ENCODE measurements at regions of chr15 and their contacts with region 1.

Region 1: GRCh38 chr15:44426975-44427755 is at the start of gene CTDSPL2:
- DNase-seq: peak; percentile 98 to 99 (median 99)
- H3K4me3 ChIP-seq: peak within 1 kb of the TSS; percentile 34 to 95 (median 65)
- H3K27ac ChIP-seq: peak within 1 kb of the TSS; percentile 88 to 99 (median 94)
- H3K4me1 ChIP-seq: peaks cover 13 to 24% of the 10 kb centered on the region in 2 donors
- H3K27me3 ChIP-seq: no peaks in the 10 kb centered on the region
- CTCF ChIP-seq: peak in 2 of 6 experiments; percentile 22 to 47
- POLR2A ChIP-seq: peak in 1 of 2 donors; percentile 86
- total RNA-seq, gene CTDSPL2: 12.1 to 70.9 (median 32.3) TPM

Region 2: DNA sequence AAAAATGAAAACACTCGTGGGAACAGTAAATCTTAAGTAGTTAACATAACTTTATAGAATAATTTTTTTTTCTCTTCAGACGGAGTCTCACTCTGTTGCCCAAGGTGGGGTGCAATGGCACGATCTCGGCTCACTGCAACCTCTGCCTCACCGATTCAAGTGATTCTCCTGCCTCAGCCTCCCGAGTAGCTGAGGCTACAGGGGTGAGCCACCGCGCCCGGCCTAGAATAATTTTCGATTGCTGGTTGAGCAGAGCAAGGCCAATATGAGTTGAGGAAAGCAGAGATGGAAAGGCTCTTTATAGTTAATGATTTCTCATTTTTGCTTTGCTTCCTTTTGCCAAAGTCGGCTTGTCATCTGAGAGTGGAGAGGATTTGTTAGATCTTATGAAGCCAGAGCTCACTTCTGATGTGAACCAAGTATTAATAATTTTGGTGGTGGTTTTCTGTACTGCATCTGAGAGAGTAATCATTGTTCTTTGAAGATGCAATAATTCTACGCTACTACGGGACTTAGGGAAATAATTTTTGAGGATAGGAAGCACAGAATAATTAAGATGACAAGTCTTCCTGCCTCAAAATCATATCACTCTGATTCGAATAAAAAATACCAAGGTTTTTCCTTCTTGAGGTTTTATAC is 140.2 kb before region 1 on chr15:
- intact Hi-C with region 1: loop called in 1 of 2 experiments (anchors 10 kb)
- DNase-seq: no peak
- H3K4me3 ChIP-seq: peak overlapping the region in 1 of 4 donors; percentile 99
- H3K27ac ChIP-seq: peak overlapping the region in 3 of 5 donors; percentile 80 to 93 (median 88)
- H3K4me1 ChIP-seq: peaks cover 22 to 33% of the 10 kb centered on the region in 2 donors
- H3K27me3 ChIP-seq: no peaks in the 10 kb centered on the region
- CTCF ChIP-seq: peak; percentile 21 to 48 (median 30)
- POLR2A ChIP-seq: no peak

Measured in adrenal gland (tissue), 19 donors.